ENCODE measurements at regions of chr2 and their contacts with region 1.

Region 1: GRCh38 chr2:224357098-224357901 is 44.6 kb downstream of the FAM124B start:
- DNase-seq: peak; percentile 64 to 74 (median 65)
- H3K4me3 ChIP-seq: no peak overlapping the region
- H3K4me3 Mint-ChIP-seq: no peak overlapping the region
- H3K27ac ChIP-seq: no peak overlapping the region
- H3K27ac Mint-ChIP-seq: no peak overlapping the region
- H3K4me1 ChIP-seq: peaks cover 0 to 4% of the 10 kb centered on the region in 2 donors
- H3K4me1 Mint-ChIP-seq: peaks cover 2% of the 10 kb centered on the region
- H3K27me3 ChIP-seq: no peaks in the 10 kb centered on the region
- H3K27me3 Mint-ChIP-seq: peaks cover 1 to 2% (median 2%) of the 10 kb centered on the region in 3 donors
- CTCF ChIP-seq: peak; percentile 88

Region 2: GRCh38 chr2:224449212-224450147 is 92.2 kb after region 1 on chr2:
- intact Hi-C with region 1: loop called (anchors 2 to 5 kb)
- DNase-seq: peak; percentile 21 to 44 (median 39)
- H3K4me3 ChIP-seq: no peak overlapping the region
- H3K4me3 Mint-ChIP-seq: no peak overlapping the region
- H3K27ac ChIP-seq: no peak overlapping the region
- H3K27ac Mint-ChIP-seq: no peak overlapping the region
- H3K4me1 ChIP-seq: no peaks in the 10 kb centered on the region
- H3K4me1 Mint-ChIP-seq: no peaks in the 10 kb centered on the region
- H3K27me3 ChIP-seq: no peaks in the 10 kb centered on the region
- H3K27me3 Mint-ChIP-seq: peaks cover 0 to 11% (median 0%) of the 10 kb centered on the region in 3 donors
- CTCF ChIP-seq: peak; percentile 73

Region 3: DNA sequence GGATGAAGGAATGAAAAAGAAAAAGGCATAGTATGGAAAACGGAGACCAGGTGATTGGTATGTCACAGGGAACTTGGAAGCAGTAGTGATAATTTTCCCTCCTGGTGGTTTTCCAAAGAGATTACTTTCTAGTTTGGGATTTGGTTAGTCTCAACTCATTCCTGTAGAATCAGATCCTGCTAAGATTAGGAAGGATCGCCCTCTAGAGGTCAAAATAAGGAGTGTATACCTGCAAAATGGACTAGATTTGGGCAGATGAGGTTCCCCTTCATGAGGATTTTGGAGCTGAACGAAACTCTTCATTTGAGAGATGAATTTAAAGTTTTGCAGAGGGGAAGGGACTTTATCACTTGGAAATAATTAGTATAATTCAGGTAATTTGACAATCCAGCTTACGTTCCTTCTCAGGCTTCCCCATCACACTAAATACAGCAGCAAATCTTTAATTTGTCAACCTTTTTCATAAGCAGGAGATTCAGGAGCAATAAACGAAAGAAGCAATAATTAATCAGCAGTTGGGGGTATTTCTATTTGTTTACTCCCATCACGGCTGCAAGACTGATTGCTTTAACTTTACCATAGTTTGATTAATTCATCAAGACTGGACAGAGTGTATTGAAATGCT is 293.6 kb after region 1 on chr2:
- intact Hi-C with region 1: loop called (anchors 2 to 5 kb)
- DNase-seq: peak; percentile 23 to 58 (median 46)
- H3K4me3 ChIP-seq: no peak overlapping the region
- H3K4me3 Mint-ChIP-seq: no peak overlapping the region
- H3K27ac ChIP-seq: no peak overlapping the region
- H3K27ac Mint-ChIP-seq: no peak overlapping the region
- H3K4me1 ChIP-seq: no peaks in the 10 kb centered on the region
- H3K4me1 Mint-ChIP-seq: peaks cover 3% of the 10 kb centered on the region
- H3K27me3 ChIP-seq: no peaks in the 10 kb centered on the region
- H3K27me3 Mint-ChIP-seq: peaks cover 0 to 3% (median 1%) of the 10 kb centered on the region in 3 donors
- CTCF ChIP-seq: peak; percentile 87

Region 4: GRCh38 chr2:224778474-224778877 is 421.2 kb after region 1 on chr2:
- intact Hi-C with region 1: loop called in 1 of 2 experiments (anchors 5 kb)
- DNase-seq: peak; percentile 19 to 38 (median 25)
- H3K4me3 ChIP-seq: no peak overlapping the region
- H3K4me3 Mint-ChIP-seq: no peak overlapping the region
- H3K27ac ChIP-seq: no peak overlapping the region
- H3K27ac Mint-ChIP-seq: no peak overlapping the region
- H3K4me1 ChIP-seq: no peaks in the 10 kb centered on the region
- H3K4me1 Mint-ChIP-seq: peaks cover 5% of the 10 kb centered on the region
- H3K27me3 ChIP-seq: no peaks in the 10 kb centered on the region
- H3K27me3 Mint-ChIP-seq: no peaks in the 10 kb centered on the region
- CTCF ChIP-seq: peak; percentile 94

Region 5: GRCh38 chr2:225660262-225661131 is 1303.2 kb after region 1 on chr2:
- intact Hi-C with region 1: loop called in 1 of 2 experiments (anchors 10 kb)
- DNase-seq: peak; percentile 29 to 49 (median 45)
- H3K4me3 ChIP-seq: no peak overlapping the region
- H3K4me3 Mint-ChIP-seq: no peak overlapping the region
- H3K27ac ChIP-seq: no peak overlapping the region
- H3K27ac Mint-ChIP-seq: no peak overlapping the region
- H3K4me1 ChIP-seq: no peaks in the 10 kb centered on the region
- H3K4me1 Mint-ChIP-seq: no peaks in the 10 kb centered on the region
- H3K27me3 ChIP-seq: no peaks in the 10 kb centered on the region
- H3K27me3 Mint-ChIP-seq: peaks cover 4 to 9% (median 6%) of the 10 kb centered on the region in 3 donors
- CTCF ChIP-seq: peak; percentile 91